AG04449 (cell line): ENCODE measurements at regions of chr14 and their contacts with region 1.

Region 1: DNA sequence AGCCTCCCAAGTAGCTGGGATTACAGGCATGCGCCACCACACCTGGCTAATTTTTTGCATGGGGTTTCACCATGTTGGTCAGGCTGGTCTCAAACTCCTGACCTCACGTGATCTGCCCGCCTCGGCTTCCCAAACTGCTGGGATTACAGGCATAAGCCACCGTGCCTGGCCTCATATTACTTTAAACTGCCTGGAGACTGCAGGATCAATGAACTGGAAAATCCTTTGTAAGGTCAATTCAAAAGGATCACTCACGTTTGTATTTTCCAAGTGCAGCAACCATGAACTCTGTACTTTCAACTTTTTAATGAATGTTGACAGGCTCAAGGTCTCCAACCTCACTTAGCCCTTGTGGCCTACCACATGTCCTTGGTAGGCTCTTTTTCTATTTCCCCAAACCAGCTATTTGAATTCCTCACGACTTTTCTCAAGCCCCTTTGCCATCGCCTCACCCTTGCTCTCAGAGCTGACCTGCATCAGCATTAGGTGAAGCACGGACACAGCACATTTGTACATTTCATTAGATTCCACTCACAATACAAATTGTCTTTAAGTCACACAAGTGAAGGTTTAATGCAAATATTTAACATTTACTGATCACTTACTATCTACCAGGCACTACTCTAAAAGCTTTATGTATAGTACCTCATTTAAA is 42.2 kb upstream of the GCH1 start:
- DNase-seq: no peak
- H3K4me3 ChIP-seq: no peak overlapping the region
- CTCF ChIP-seq: no peak

Region 2: GRCh38 chr14:55071870-55072640 is 127.2 kb after region 1 on chr14:
- CTCF ChIA-PET with region 1: no interaction called
- POLR2A ChIA-PET with region 1: interaction called, 10 read pairs
- DNase-seq: peak; percentile 90
- H3K4me3 ChIP-seq: no peak overlapping the region
- CTCF ChIP-seq: no peak